HepG2 (cell line): ENCODE measurements at regions of chr1 and their contacts with region 1.

Region 1: DNA sequence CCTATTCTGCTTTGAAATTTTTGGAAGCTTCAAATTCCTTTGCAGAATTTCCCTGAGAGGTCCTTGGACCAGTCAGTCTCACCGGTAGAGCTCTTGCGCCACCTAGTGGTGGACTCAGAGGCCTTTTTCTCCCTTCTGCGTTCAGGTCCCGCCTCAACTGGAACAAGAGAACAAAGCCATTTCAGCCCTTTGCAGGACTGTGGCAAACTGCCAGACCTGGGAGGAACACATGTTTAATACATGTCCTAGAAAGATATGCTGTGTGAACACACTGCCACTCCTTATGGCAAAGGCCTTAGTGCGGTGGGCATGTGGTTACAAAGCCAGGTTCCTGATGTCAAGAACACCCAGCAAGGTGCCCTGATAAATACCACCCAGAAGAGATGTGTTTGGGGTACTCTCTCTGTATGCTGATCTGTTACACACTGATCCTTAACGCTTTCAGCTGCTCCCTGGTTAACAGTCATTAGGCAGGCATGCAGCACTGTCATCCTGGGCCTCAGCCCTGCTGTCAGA is 82.2 kb upstream of the SSX2IP start:
- DNase-seq: peak; percentile 55
- ATAC-seq: peak; percentile 94
- H3K4me3 ChIP-seq: no peak overlapping the region
- H3K27ac ChIP-seq: no peak overlapping the region
- H3K4me1 ChIP-seq: no peaks in the 10 kb centered on the region
- H3K27me3 ChIP-seq: peaks cover 0 to 14% of the 10 kb centered on the region in 2 experiments; a peak in 2 of 5 replicates
- CTCF ChIP-seq: peak; percentile 84
- EP300 ChIP-seq: no peak
- POLR2A ChIP-seq: no peak
- RAD21 ChIP-seq: peak; percentile 60

Region 2: GRCh38 chr1:84442256-84442655 is 330.2 kb before region 1 on chr1:
- CTCF ChIA-PET with region 1: no interaction called
- POLR2A ChIA-PET with region 1: no interaction called
- in situ Hi-C with region 1: no loop called
- intact Hi-C with region 1: loop called (anchors 1 kb)
- DNase-seq: peak; percentile 30
- ATAC-seq: peak; percentile 73
- H3K4me3 ChIP-seq: no peak overlapping the region
- H3K27ac ChIP-seq: no peak overlapping the region
- H3K4me1 ChIP-seq: no peaks in the 10 kb centered on the region
- H3K27me3 ChIP-seq: no peaks in the 10 kb centered on the region
- CTCF ChIP-seq: peak; percentile 47
- EP300 ChIP-seq: no peak
- POLR2A ChIP-seq: no peak
- RAD21 ChIP-seq: no peak

Region 3: GRCh38 chr1:84690397-84691121 is 81.9 kb before region 1 on chr1 and contains the start of gene SSX2IP:
- CTCF ChIA-PET with region 1: no interaction called
- POLR2A ChIA-PET with region 1: no interaction called
- in situ Hi-C with region 1: no loop called
- intact Hi-C with region 1: no loop called
- DNase-seq: peak; percentile 92
- ATAC-seq: peak; percentile 91
- H3K4me3 ChIP-seq: peak within 1 kb of the TSS; percentile 85 to 90 (median 87)
- H3K27ac ChIP-seq: peak within 1 kb of the TSS; percentile 78
- H3K4me1 ChIP-seq: peaks cover 40% of the 10 kb centered on the region
- H3K27me3 ChIP-seq: no peaks in the 10 kb centered on the region
- CTCF ChIP-seq: no peak; the same call in 1 of the 2 replicates
- EP300 ChIP-seq: 0 out of 4 replicates have a peak, but pooled peaks of 1 of the 2 experiments have one; percentile 26
- POLR2A ChIP-seq: peak; percentile 51 to 59
- RAD21 ChIP-seq: no peak
- total RNA-seq, gene SSX2IP: 23.7 and 38.8 TPM in 2 replicates

Region 4: GRCh38 chr1:84834419-84835064 is 62.1 kb after region 1 on chr1:
- CTCF ChIA-PET with region 1: no interaction called
- POLR2A ChIA-PET with region 1: no interaction called
- in situ Hi-C with region 1: no loop called
- intact Hi-C with region 1: no loop called
- DNase-seq: no peak
- ATAC-seq: no peak
- H3K4me3 ChIP-seq: no peak overlapping the region
- H3K27ac ChIP-seq: no peak overlapping the region
- H3K4me1 ChIP-seq: no peaks in the 10 kb centered on the region
- H3K27me3 ChIP-seq: no peaks in the 10 kb centered on the region
- CTCF ChIP-seq: no peak
- EP300 ChIP-seq: no peak
- POLR2A ChIP-seq: no peak
- RAD21 ChIP-seq: no peak

Region 5: GRCh38 chr1:84936116-84936810 is 163.8 kb after region 1 on chr1:
- CTCF ChIA-PET with region 1: no interaction called
- POLR2A ChIA-PET with region 1: no interaction called
- in situ Hi-C with region 1: loop called (anchors 10 kb)
- intact Hi-C with region 1: loop called (anchors 5 kb)
- DNase-seq: peak; percentile 55
- ATAC-seq: peak; percentile 79
- H3K4me3 ChIP-seq: no peak overlapping the region
- H3K27ac ChIP-seq: no peak overlapping the region
- H3K4me1 ChIP-seq: no peaks in the 10 kb centered on the region
- H3K27me3 ChIP-seq: peaks cover 0 to 18% of the 10 kb centered on the region in 2 experiments; a peak in 2 of 5 replicates
- CTCF ChIP-seq: peak; percentile 83
- EP300 ChIP-seq: no peak
- POLR2A ChIP-seq: no peak
- RAD21 ChIP-seq: peak; percentile 51